ENCODE measurements at regions of chr1 and their contacts with region 1.

Region 1: DNA sequence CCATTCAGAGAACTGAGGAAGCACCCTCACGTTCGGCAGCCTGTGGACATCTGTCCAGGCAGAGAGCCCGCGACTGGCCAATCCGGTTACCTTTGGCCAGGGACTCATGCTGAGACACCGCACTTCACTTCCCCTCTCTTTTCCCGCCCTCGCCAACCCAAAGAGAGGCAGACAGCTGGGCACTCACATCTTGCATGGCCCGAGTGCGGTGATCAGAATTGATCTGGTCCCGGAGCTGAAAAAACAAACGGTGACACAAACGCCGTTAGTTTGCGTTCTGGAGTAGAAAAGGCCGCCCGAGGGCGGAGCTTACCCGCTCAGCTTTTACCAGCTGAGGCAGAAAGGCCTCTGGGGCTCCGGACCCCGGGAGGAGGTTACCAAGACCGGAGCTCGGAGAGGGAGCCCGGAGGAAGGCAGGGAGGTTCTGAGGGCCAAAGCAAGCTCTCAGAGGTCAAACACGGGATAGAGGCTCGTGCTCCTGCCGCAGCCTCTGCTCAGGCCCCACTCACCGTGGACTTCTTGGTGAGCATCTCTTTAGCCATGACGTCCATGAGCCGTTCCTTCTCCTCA is 376 bp downstream of the SF3A3 start:
- DNase-seq: peak; percentile 53
- H3K4me3 Mint-ChIP-seq: peak overlapping the region; percentile 94
- H3K27ac Mint-ChIP-seq: peak overlapping the region; percentile 88
- H3K4me1 Mint-ChIP-seq: peaks cover 19% of the 10 kb centered on the region
- H3K27me3 Mint-ChIP-seq: no peaks in the 10 kb centered on the region

Region 2: GRCh38 chr1:37514350-37515184 is 474.9 kb before region 1 on chr1 and contains the start of gene MEAF6:
- CTCF ChIA-PET with region 1: no interaction called
- intact Hi-C with region 1: loop called (anchors 1 kb)
- DNase-seq: peak; percentile 81
- H3K4me3 Mint-ChIP-seq: peak within 1 kb of the TSS; percentile 91
- H3K27ac Mint-ChIP-seq: peak within 1 kb of the TSS; percentile 95
- H3K4me1 Mint-ChIP-seq: peaks cover 40% of the 10 kb centered on the region
- H3K27me3 Mint-ChIP-seq: no peaks in the 10 kb centered on the region
- total RNA-seq, gene MEAF6: 57.5 to 62.8 TPM

Region 3: DNA sequence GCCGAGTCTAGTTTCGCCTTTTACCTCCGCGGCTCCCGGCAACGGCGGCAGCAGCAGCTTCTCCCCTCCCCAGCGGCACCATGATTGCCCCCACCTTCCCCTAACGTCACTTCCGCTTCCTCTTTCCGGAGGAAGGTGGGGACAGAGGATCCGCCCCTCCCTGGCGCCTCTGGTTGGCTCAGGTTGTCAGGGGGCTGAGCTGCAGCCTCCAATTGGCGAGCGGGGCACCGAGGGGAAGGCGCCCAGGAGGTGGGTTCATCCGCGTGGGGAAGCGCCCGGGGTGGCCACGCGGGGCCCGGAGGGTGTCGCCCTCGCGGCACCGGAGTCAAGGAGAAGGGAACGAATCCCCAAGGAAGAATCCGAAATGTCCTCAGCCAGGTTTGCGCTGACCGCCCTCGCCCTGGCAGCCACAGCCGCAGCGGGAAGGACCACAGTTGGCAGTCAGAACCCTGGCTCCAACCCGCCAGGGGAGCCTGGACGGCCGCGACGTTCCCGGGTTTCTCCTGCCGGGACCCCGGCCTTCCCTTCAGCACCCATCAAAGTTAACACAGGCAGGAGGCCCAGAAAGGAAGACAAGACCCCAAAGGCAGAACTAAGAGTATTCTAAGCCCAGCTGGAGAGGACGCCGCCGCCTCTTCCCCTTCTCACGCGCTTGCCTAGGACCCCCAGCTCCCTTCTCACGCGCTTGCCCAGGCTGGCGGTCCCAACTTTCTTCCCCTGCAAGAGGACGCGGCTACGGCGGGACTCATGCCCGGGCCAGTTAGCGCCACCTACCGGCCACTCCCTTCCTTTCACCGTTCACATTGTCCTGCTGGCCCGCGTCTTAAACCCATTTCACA is 129.7 kb before region 1 on chr1 and contains the start of gene MTF1:
- CTCF ChIA-PET with region 1: interaction called, 4 read pairs
- intact Hi-C with region 1: loop called (anchors 1 kb)
- DNase-seq: peak; percentile 98
- H3K4me3 Mint-ChIP-seq: peak within 1 kb of the TSS; percentile 92
- H3K27ac Mint-ChIP-seq: peak within 1 kb of the TSS; percentile 84
- H3K4me1 Mint-ChIP-seq: peaks cover 39% of the 10 kb centered on the region
- H3K27me3 Mint-ChIP-seq: no peaks in the 10 kb centered on the region
- total RNA-seq, gene MTF1: 18.9 to 19.1 TPM

Region 4: GRCh38 chr1:37875834-37876233 is 113.6 kb before region 1 on chr1:
- CTCF ChIA-PET with region 1: no interaction called
- intact Hi-C with region 1: no loop called
- DNase-seq: no peak
- H3K4me3 Mint-ChIP-seq: no peak overlapping the region
- H3K27ac Mint-ChIP-seq: no peak overlapping the region
- H3K4me1 Mint-ChIP-seq: no peaks in the 10 kb centered on the region
- H3K27me3 Mint-ChIP-seq: no peaks in the 10 kb centered on the region

Region 5: DNA sequence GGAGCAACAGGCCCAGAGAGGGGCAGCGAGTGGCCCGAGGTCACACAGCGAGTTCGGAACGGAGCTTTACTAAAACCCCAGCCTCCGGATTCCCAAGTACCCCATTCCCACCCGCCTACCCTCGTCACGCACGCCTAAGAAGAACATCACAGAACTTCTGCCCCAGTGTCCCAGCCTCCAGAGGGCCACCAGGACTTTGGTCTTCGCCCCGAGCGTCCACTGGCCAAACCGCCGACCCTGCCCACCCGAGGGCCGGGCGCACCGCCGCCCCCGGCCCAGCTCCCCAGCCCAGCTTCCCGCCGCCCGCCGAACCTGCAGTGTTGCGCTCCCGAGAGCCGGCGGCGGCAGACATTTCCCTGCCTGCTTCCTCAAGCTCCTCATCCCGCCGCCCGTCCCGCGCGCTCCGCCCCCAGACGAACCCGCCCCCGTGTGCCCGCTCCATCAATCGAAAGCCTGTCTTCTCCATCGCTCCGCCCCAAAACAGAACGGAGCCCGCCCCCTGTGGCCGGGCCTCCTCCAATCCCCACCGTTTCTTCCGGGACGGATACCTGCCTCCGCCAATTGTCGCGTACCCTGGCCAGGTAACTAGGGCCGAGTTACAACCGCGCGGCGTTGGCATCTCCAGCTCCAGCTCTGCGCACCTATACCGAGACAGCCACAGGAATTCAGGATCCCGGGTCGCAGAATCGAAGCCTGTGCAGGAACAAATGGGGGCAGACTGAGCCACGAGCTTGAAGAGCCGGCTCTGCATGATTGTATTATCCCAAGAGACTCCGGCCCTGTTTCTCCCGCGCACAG is 57.9 kb before region 1 on chr1:
- CTCF ChIA-PET with region 1: interaction called, 3 read pairs
- intact Hi-C with region 1: loop called (anchors 5 kb)
- DNase-seq: peak; percentile 99
- H3K4me3 Mint-ChIP-seq: peak overlapping the region; percentile 93
- H3K27ac Mint-ChIP-seq: peak overlapping the region; percentile 65
- H3K4me1 Mint-ChIP-seq: peaks cover 46% of the 10 kb centered on the region
- H3K27me3 Mint-ChIP-seq: no peaks in the 10 kb centered on the region

Region 6: DNA sequence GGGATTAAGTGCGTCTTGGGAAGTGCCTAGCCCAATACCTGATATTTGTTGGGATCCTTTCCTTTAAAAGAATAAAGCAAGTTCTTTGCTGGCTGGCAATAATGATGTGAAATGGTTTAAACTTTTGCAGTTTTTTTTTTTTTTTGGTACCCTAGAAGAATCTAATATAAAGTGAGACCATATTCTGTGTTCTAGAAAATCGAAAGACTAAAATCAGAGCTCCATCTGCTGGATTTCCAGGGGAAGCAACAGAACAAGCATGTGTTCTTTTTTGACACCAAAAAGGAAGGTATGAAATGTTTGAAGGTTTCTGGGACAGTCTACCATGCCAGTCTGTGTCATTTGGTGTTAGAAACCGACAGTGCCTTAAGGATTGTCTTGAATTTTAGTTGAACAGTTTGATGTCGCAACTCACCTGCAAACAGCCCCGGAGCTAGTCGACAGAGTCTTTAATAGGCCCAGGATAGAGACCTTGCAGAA is 29.5 kb after region 1 on chr1:
- CTCF ChIA-PET with region 1: interaction called, 23 read pairs
- intact Hi-C with region 1: loop called (anchors 1 kb)
- DNase-seq: no peak
- H3K4me3 Mint-ChIP-seq: no peak overlapping the region
- H3K27ac Mint-ChIP-seq: no peak overlapping the region
- H3K4me1 Mint-ChIP-seq: peaks cover 24% of the 10 kb centered on the region
- H3K27me3 Mint-ChIP-seq: no peaks in the 10 kb centered on the region

Region 7: GRCh38 chr1:38502758-38503157 is 513.3 kb after region 1 on chr1:
- CTCF ChIA-PET with region 1: no interaction called
- intact Hi-C with region 1: no loop called
- DNase-seq: no peak
- H3K4me3 Mint-ChIP-seq: no peak overlapping the region
- H3K27ac Mint-ChIP-seq: no peak overlapping the region
- H3K4me1 Mint-ChIP-seq: peaks cover 7% of the 10 kb centered on the region
- H3K27me3 Mint-ChIP-seq: peaks cover 15% of the 10 kb centered on the region